OCI-LY7 (cell line): ENCODE measurements at regions of chr12 and their contacts with region 1.

Region 1: GRCh38 chr12:103930034-103930786 is at the start of gene HSP90B1:
- DNase-seq: peak; percentile 100
- H3K4me3 ChIP-seq: peak within 1 kb of the TSS; percentile 79
- H3K27ac ChIP-seq: peak within 1 kb of the TSS; percentile 91
- H3K4me1 ChIP-seq: peaks cover 48% of the 10 kb centered on the region
- CTCF ChIP-seq: no peak
- total RNA-seq, gene HSP90B1: 235 and 303 TPM in 2 replicates

Region 2: DNA sequence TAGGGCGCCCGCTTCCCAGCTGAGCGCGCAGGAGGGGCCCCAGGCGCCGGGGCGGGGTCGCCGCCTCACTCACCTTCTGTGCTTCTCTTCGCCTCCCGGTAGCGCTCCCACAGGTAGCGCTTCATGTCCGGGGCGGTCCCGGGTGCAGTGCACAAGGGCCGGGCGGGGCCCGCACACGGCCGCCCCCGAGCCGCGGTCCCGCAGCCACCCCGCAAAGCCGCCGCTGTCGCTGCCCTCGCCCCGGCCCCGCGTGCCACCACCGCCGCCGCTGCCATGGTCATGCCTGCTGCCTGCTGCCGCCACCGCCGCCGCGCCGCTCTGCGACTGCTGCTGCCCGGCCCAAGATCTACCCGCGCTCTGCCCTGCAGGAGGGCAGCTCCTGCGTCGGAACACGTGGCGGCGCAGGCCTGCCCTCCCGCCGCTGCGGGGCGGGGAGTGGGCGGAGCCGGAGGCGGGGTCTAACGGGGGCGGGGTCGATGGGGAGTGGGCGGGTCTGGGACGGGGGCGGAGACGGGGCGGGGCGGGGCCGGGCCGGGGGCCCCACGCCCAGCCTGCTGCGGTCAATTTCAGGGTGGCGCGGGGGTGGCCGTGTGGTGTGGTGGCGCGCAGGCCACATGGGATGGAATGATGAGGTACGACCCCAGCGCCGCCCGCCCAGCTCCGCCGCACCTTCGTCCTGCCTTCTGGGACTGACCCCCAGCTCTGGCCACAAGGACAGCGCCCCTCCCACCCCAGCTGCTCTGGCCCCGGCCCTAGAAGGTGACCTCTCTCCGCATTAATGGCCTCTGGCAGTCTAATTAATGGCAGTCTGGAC is 89.1 kb before region 1 on chr12 and contains the start of gene NT5DC3:
- CTCF ChIA-PET with region 1: no interaction called
- POLR2A ChIA-PET with region 1: no interaction called
- intact Hi-C with region 1: loop called (anchors 2 kb)
- DNase-seq: peak; percentile 89
- H3K4me3 ChIP-seq: peak within 1 kb of the TSS; percentile 99
- H3K27ac ChIP-seq: no peak within 1 kb of the TSS
- H3K4me1 ChIP-seq: peaks cover 14% of the 10 kb centered on the region
- CTCF ChIP-seq: no peak
- total RNA-seq, gene NT5DC3: 4.6 and 4.7 TPM in 2 replicates

Region 3: GRCh38 chr12:103877934-103878510 is 52.2 kb before region 1 on chr12:
- CTCF ChIA-PET with region 1: no interaction called
- POLR2A ChIA-PET with region 1: no interaction called
- intact Hi-C with region 1: loop called (anchors 1 kb)
- DNase-seq: peak; percentile 76
- H3K4me3 ChIP-seq: no peak overlapping the region
- H3K27ac ChIP-seq: no peak overlapping the region
- H3K4me1 ChIP-seq: peaks cover 17% of the 10 kb centered on the region
- CTCF ChIP-seq: peak; percentile 93

Region 4: GRCh38 chr12:103956516-103957027 is 26.4 kb after region 1 on chr12:
- CTCF ChIA-PET with region 1: no interaction called
- POLR2A ChIA-PET with region 1: interaction called, 15 read pairs
- intact Hi-C with region 1: loop called (anchors 1 kb)
- DNase-seq: no peak
- H3K4me3 ChIP-seq: peak overlapping the region; percentile 86
- H3K27ac ChIP-seq: peak overlapping the region; percentile 76
- H3K4me1 ChIP-seq: peaks cover 12% of the 10 kb centered on the region
- CTCF ChIP-seq: no peak

Region 5: DNA sequence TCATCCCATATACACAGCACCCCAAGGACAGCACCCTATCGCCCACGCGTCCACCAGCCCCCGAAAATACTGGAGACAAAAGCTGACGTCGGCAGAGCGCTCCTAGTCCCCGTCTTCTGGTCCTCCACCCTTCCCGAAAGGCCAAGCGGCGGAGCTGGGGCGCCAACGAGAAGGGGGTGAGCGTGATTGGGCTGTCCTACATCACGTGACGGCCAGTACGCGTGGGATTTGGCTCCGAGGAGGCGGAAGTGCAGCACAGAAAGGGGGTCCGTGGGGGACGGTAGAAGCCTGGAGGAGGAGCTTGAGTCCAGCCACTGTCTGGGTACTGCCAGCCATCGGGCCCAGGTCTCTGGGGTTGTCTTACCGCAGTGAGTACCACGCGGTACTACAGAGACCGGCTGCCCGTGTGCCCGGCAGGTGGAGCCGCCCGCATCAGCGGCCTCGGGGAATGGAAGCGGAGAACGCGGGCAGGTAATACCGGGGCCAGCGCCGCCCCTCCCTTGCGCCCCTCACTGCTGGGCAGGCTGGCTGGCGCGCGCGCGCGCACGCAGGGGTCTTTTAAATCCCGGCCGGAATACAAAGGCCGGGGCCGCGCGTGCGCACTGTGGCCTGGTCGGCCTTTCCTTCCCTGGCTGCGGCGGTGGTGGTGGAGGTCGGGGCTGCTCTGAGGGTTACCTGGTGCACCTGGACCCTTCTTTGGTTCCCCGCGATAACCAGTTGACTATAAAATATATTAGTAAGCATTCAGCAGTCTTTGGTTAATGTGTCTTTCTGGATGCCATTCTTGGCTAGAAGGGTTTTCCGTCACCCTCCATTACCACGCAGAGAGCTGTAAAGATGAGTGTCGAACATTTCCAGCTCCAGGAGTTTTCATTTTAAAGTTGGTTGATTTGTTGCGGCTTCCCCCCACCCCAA is 35.6 kb after region 1 on chr12 and contains the start of gene TDG:
- CTCF ChIA-PET with region 1: interaction called, 4 read pairs
- POLR2A ChIA-PET with region 1: interaction called, 27 read pairs
- intact Hi-C with region 1: loop called (anchors 1 kb)
- DNase-seq: peak; percentile 98
- H3K4me3 ChIP-seq: peak within 1 kb of the TSS; percentile 87
- H3K27ac ChIP-seq: peak within 1 kb of the TSS; percentile 69
- H3K4me1 ChIP-seq: peaks cover 40% of the 10 kb centered on the region
- CTCF ChIP-seq: peak; percentile 28; the same call in 1 of the 2 replicates
- total RNA-seq, gene TDG: 39.4 and 43.3 TPM in 2 replicates

Region 6: DNA sequence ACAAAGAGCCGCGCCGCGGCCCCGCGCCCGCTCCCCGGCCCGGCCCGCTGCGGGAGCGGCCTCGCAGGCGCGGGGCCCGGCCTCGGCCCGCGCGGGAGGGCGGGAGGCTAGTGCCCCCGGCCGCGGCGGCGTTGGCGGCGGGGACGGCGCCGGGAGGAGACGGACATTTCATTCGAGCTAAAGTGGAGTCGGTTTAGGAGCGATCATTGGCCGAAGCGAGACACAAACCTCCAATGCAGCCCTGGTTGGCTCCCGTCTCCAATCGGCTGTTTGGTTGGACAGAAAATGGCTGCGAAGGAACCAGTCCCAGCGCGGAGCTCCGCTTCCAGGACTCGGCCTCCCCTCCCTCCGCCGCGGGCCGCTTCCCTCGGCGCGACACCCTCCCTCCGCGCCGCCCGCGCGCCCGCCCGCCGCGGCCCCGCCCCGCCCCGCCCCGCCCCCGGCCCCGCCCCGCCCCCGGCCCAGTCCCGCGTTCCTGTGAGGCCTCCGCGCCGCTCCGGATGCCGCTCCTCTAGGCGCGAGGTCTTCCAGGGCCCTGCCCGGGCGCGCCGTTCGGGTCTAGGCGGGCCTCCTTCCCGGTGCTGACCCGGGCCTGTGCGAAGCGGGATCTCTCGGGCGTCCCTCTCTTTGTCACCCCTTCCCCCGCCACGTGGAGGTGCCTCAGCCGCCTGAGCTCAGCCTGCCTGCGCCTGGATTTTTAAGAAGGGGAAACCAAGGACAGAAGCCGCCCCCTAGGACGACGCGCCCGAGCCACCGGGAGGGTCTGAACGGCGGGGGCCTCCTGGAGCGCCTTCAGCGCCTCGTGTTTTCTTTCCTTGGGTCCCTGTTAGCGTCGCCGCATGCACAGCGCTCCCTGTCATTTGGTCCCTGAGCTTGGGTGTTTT is 207.9 kb after region 1 on chr12 and contains the start of gene NFYB:
- CTCF ChIA-PET with region 1: no interaction called
- POLR2A ChIA-PET with region 1: interaction called, 4 read pairs
- intact Hi-C with region 1: loop called (anchors 5 kb)
- DNase-seq: peak; percentile 97
- H3K4me3 ChIP-seq: peak within 1 kb of the TSS; percentile 88
- H3K27ac ChIP-seq: peak within 1 kb of the TSS; percentile 82
- H3K4me1 ChIP-seq: peaks cover 31% of the 10 kb centered on the region
- CTCF ChIP-seq: no peak
- total RNA-seq, gene NFYB: 21.6 and 30.2 TPM in 2 replicates